Ascending aorta (tissue), 2 donors: ENCODE measurements at regions of chrX and their contacts with region 1.

Region 1: GRCh38 chrX:7147978-7148824 is at the start of gene PUDP:
- DNase-seq: peak; percentile 64 to 93
- H3K4me3 ChIP-seq: peak within 1 kb of the TSS; percentile 66 to 70
- H3K27ac ChIP-seq: peak within 1 kb of the TSS; percentile 86 to 91
- H3K4me1 ChIP-seq: peaks cover 0 to 7% of the 10 kb centered on the region in 2 donors
- H3K27me3 ChIP-seq: no peaks in the 10 kb centered on the region
- CTCF ChIP-seq: peak; percentile 21 to 56 (median 35)
- total RNA-seq, gene PUDP: 1.7 TPM

Region 2: GRCh38 chrX:7045238-7045955 is 102.8 kb before region 1 on chrX:
- intact Hi-C with region 1: no loop called
- DNase-seq: no peak
- H3K4me3 ChIP-seq: no peak overlapping the region
- H3K27ac ChIP-seq: no peak overlapping the region
- H3K4me1 ChIP-seq: no peaks in the 10 kb centered on the region
- H3K27me3 ChIP-seq: no peaks in the 10 kb centered on the region
- CTCF ChIP-seq: no peak

Region 3: GRCh38 chrX:7330971-7331746 is 183.0 kb after region 1 on chrX:
- intact Hi-C with region 1: loop called (anchors 5 kb)
- DNase-seq: peak in 1 of 2 donors; percentile 80
- H3K4me3 ChIP-seq: peak overlapping the region in 1 of 2 donors; percentile 14
- H3K27ac ChIP-seq: peak overlapping the region; percentile 47 to 55
- H3K4me1 ChIP-seq: peaks cover 0 to 10% of the 10 kb centered on the region in 2 donors
- H3K27me3 ChIP-seq: no peaks in the 10 kb centered on the region
- CTCF ChIP-seq: no peak